CD14-positive monocyte (primary cell): ENCODE measurements at regions of chr12 and their contacts with region 1.

Region 1: DNA sequence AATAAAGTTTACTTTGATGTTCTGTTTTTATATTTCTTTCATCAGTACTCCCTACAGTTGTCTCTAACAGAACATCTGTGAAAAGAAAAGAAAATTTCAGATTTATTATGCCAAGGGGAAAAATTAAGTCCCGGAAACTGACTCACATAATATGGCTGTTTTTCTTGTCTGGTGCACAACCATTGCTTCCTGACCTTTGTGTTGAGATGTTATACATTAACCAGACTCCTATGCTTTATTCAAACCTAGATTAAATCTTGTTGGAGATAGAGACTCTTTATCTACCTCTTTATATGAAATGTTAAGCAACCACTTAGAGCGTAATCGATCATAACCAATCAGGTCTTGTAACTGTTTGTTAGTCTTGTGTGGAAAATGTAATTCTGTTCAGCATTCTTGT is 37.6 kb upstream of the BICD1 start:
- DNase-seq: no peak
- H3K4me3 ChIP-seq: no peak overlapping the region
- H3K4me3 Mint-ChIP-seq: no peak overlapping the region
- H3K27ac ChIP-seq: no peak overlapping the region
- H3K27ac Mint-ChIP-seq: no peak overlapping the region
- H3K4me1 ChIP-seq: no peaks in the 10 kb centered on the region
- H3K4me1 Mint-ChIP-seq: peaks cover 3% of the 10 kb centered on the region
- H3K27me3 ChIP-seq: no peaks in the 10 kb centered on the region
- H3K27me3 Mint-ChIP-seq: peaks cover 0 to 6% (median 4%) of the 10 kb centered on the region in 3 donors
- CTCF ChIP-seq: no peak

Region 2: GRCh38 chr12:31672521-31672920 is 396.6 kb before region 1 on chr12:
- intact Hi-C with region 1: loop called in 1 of 2 experiments (anchors 10 kb)
- DNase-seq: no peak
- H3K4me3 ChIP-seq: no peak overlapping the region
- H3K4me3 Mint-ChIP-seq: no peak overlapping the region
- H3K27ac ChIP-seq: no peak overlapping the region
- H3K27ac Mint-ChIP-seq: no peak overlapping the region
- H3K4me1 ChIP-seq: no peaks in the 10 kb centered on the region
- H3K4me1 Mint-ChIP-seq: no peaks in the 10 kb centered on the region
- H3K27me3 ChIP-seq: no peaks in the 10 kb centered on the region
- H3K27me3 Mint-ChIP-seq: peaks cover 0 to 3% (median 2%) of the 10 kb centered on the region in 3 donors
- CTCF ChIP-seq: no peak

Region 3: DNA sequence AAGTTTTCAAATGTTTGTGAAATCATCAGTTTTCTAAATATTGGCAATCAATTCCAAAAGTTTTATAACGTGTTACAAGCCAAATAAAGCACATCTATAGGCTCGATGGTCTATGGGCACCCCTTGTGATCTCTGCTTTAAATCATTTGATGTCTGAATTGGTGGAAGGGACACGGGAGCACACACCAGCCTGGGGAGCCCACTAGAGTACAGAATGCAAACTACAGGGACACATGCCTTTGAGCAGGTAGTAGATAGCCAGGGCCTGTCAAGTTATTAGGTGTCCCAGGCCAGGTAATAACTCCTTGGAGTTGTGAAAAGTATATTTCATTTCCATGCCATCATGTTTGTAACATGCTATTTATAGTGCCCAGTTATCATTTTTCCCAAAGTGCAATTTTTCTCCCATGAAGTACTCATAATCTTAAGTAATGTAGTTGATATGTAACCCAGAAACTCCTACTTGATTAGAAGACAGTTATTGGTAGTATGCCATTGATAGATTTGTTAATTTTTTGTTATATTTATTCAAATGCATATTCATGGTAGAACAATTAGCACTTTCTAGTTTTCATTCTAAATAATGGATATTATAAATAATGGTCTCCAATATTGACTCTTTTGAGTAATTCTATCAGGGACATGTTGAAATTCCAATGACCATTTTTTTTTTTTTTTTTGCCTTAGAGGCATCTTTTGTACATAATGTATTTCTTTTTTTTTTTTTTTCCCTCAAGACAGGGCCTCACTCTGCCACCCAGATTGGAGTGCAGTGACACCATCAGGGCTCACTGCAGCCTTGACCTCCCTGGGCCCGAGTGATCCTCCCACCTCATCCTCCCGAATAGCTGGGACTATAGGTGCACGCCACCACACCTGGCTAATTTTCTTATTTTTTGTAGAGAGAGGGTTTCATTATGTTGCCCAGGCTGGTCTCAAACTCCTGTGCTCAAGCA is 233.4 kb after region 1 on chr12:
- intact Hi-C with region 1: loop called in 1 of 2 experiments (anchors 10 kb)
- DNase-seq: peak in 1 of 3 donors; percentile 3
- H3K4me3 ChIP-seq: no peak overlapping the region
- H3K4me3 Mint-ChIP-seq: no peak overlapping the region
- H3K27ac ChIP-seq: no peak overlapping the region
- H3K27ac Mint-ChIP-seq: peak overlapping the region in 1 of 7 donors; percentile 10
- H3K4me1 ChIP-seq: no peaks in the 10 kb centered on the region
- H3K4me1 Mint-ChIP-seq: peaks cover 5% of the 10 kb centered on the region
- H3K27me3 ChIP-seq: no peaks in the 10 kb centered on the region
- H3K27me3 Mint-ChIP-seq: peaks cover 0 to 3% (median 0%) of the 10 kb centered on the region in 3 donors
- CTCF ChIP-seq: no peak